Endothelial cell of umbilical vein (primary cell): ENCODE measurements at regions of chr12 and their contacts with region 1.

Region 1: DNA sequence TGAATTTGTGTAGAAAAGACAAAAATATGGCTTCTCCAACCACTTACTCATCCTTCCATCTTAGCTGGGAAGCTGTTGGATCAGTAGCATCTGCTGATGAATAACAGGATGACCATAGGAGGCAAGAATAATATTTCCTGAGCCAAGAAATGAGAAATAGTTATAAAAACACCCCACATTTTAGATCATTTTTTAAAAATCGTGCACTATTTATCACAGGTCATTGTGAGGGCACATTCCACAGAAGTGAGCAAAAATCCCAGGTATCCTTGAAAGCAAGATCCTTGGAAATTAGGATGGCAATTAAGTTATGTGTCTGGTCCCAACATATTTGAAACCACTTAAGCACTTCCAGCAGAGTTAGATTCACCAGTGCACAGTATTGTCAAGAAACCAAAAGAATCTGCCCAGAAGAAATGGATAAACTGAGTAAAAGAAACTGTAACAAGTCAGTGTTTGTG is 8.4 kb downstream of the FAR2 start:
- DNase-seq: peak; percentile 78
- H3K4me3 ChIP-seq: no peak overlapping the region
- H3K27ac ChIP-seq: peak overlapping the region; percentile 47
- H3K4me1 ChIP-seq: peaks cover 41% of the 10 kb centered on the region
- H3K27me3 ChIP-seq: no peaks in the 10 kb centered on the region
- CTCF ChIP-seq: no peak
- POLR2A ChIP-seq: no peak

Region 2: GRCh38 chr12:29182841-29183240 is 25.3 kb after region 1 on chr12:
- CTCF ChIA-PET with region 1: no interaction called
- POLR2A ChIA-PET with region 1: no interaction called
- dilution Hi-C with region 1: no loop called
- intact Hi-C with region 1: no loop called
- DNase-seq: no peak
- H3K4me3 ChIP-seq: no peak overlapping the region
- H3K27ac ChIP-seq: no peak overlapping the region
- H3K4me1 ChIP-seq: no peaks in the 10 kb centered on the region
- H3K27me3 ChIP-seq: no peaks in the 10 kb centered on the region
- CTCF ChIP-seq: no peak
- POLR2A ChIP-seq: no peak

Region 3: DNA sequence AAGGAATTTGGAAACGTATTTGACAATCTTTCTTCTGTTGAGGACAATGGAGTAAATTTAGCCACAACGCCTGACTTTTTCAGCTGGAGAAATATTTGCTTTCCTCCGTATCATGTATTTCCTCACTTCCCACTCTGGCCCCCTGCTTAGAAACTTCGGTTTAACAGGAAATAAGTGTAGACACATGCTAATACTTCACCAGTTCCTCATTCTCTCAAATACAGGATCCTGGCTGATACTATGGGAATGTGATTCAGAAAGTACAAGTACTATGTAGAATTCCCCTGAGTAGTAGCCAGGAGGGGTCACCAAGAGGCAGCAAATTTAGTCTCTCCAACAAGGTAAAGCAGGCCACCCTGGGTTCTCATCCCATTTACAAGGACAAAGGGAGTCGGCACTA is 49.6 kb after region 1 on chr12:
- CTCF ChIA-PET with region 1: no interaction called
- POLR2A ChIA-PET with region 1: no interaction called
- dilution Hi-C with region 1: no loop called
- intact Hi-C with region 1: loop called (anchors 2 kb)
- DNase-seq: peak; percentile 89
- H3K4me3 ChIP-seq: no peak overlapping the region
- H3K27ac ChIP-seq: no peak overlapping the region
- H3K4me1 ChIP-seq: no peaks in the 10 kb centered on the region
- H3K27me3 ChIP-seq: no peaks in the 10 kb centered on the region
- CTCF ChIP-seq: no peak
- POLR2A ChIP-seq: no peak

Region 4: DNA sequence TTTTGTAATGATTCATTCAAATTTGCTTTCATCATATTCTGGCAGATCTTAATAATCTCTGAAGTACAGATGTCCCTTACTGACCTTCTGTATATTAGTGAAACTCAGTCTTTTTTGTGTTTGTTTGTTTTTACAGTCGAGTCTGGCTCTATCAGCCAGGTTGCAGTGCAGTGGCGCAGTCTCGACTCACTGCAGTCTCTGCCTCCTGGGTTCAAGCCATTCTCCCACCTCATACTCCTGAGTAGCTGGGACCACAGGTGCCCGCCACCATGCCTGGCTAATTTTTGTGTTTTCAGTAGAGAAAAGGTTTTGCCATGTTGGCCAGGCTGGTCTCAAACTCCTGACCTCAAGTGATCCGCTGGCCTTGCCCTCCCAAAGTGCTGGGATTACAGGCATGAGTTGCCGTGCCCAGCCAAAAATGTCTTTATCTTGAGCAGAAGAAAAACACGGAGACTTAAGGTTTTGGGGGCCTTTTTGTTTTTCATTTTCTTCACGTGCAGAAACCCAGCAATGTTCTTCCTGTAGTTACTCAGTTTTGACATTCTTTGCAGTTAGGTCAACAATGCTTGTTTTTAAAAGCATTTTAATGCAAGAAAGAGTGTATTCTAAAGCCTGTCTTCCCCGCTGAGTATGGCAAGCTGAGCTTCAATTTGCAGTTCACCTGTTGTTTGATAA is 71.1 kb after region 1 on chr12:
- CTCF ChIA-PET with region 1: no interaction called
- POLR2A ChIA-PET with region 1: no interaction called
- dilution Hi-C with region 1: no loop called
- intact Hi-C with region 1: loop called (anchors 2 kb)
- DNase-seq: peak; percentile 73
- H3K4me3 ChIP-seq: no peak overlapping the region
- H3K27ac ChIP-seq: peak overlapping the region; percentile 40
- H3K4me1 ChIP-seq: peaks cover 24% of the 10 kb centered on the region
- H3K27me3 ChIP-seq: no peaks in the 10 kb centered on the region
- CTCF ChIP-seq: no peak
- POLR2A ChIP-seq: no peak